ENCODE measurements at regions of chr6 and their contacts with region 1.

Region 1: DNA sequence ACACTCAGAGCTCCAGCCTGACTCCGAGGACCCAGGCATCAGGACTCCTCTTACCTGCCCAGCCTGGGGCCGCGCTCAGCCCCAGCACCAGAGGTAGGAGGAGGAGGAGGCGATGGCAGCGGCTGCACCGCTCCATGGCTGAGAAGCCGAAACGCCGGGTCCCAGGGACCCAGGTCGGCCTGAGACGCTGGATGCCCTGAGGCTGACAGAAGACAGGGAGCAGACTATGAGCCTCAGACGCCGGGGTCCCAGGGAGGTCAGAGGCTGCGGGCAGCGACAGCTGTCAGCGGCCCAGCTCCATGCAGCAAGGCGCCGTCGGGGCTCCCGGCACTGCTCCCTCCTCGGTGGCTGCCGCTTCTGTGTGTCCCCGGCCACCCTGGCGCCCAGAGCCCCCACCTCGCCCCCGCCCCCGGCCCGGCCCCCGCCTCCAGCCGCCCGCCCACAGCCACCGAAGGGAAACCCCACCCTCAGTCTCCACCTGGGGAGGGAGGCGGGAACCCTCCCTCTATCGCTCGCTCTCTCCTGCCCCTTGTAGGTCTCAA is at the start of gene COL11A2:
- DNase-seq: no peak
- H3K4me3 ChIP-seq: no peak within 1 kb of the TSS
- H3K27ac ChIP-seq: no peak within 1 kb of the TSS
- H3K4me1 ChIP-seq: no peaks in the 10 kb centered on the region
- H3K27me3 ChIP-seq: no peaks in the 10 kb centered on the region
- CTCF ChIP-seq: no peak
- total RNA-seq, gene COL11A2: 2.2 and 3.4 TPM in 2 replicates

Region 2: DNA sequence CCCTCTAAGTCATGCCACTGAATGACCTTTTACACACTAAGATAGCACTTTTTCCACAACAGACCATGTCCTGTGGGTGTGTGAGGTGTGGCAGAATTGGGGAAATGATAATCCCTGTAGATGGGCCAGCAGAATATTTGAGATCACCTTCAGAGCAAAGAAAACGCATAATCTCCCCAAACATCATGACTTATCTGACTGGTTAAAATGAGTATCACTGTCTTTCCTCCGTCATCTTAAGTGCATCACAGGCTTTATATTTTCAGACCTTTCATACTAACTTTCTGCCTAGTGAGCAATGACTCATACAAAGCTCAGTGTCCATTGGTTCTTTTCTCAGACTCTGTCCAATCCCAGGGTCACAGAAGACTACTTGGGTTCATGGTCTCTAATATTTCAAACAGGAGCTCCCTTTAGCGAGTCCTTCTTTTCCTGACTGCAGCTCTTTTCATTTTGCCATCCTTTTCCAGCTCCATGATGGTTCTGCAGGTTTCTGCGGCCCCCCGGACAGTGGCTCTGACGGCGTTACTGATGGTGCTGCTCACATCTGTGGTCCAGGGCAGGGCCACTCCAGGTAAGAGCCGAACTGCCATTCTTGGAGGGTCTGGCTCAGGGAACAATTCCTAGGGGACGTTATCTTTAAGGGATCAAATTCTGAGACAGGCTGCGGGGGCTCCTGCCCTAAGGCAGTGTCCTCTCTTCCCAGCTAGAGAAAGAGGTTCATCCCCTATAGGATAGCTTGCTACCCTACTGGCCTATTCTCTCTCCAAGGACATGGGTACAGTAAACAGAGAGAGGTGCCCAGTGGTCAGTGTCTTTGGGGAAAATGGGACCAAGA is 116.4 kb before region 1 on chr6 and contains the start of gene HLA-DPB1:
- CTCF ChIA-PET with region 1: no interaction called
- POLR2A ChIA-PET with region 1: no interaction called
- intact Hi-C with region 1: no loop called
- DNase-seq: no peak
- H3K4me3 ChIP-seq: no peak within 1 kb of the TSS
- H3K27ac ChIP-seq: no peak within 1 kb of the TSS
- H3K4me1 ChIP-seq: no peaks in the 10 kb centered on the region
- H3K27me3 ChIP-seq: peaks cover 78% of the 10 kb centered on the region
- CTCF ChIP-seq: no peak
- total RNA-seq, gene HLA-DPB1: not detected in 2 replicates

Region 3: DNA sequence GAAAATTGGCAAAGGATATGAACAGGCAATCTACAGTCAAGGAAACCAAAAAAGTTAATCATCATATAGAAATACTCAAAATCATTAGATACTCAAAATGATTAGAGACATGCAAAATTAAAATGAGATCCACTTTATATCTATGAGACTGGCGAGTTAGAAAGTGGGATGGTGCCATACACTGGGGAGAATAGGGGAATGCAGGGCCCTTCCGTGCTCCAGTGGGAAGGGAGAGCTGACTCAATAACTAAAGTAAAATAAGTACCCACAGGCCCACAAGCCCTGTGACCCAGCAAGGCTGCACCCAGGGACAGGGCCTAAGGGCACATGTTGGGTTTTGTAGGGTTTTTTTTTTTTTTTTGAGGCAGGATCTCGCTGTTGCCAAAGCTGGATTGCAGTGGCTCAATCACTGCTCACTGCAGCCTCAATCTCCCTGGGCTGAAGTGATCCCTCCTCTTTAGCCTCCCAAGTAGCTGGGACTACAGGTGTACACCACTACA is 343.0 kb after region 1 on chr6:
- CTCF ChIA-PET with region 1: interaction called, 13 read pairs
- POLR2A ChIA-PET with region 1: no interaction called
- intact Hi-C with region 1: no loop called
- DNase-seq: no peak
- H3K4me3 ChIP-seq: no peak overlapping the region
- H3K27ac ChIP-seq: no peak overlapping the region
- H3K4me1 ChIP-seq: peaks cover 8% of the 10 kb centered on the region
- H3K27me3 ChIP-seq: no peaks in the 10 kb centered on the region
- CTCF ChIP-seq: no peak